ENCODE measurements at regions of chr10 and their contacts with region 1.

Region 1: DNA sequence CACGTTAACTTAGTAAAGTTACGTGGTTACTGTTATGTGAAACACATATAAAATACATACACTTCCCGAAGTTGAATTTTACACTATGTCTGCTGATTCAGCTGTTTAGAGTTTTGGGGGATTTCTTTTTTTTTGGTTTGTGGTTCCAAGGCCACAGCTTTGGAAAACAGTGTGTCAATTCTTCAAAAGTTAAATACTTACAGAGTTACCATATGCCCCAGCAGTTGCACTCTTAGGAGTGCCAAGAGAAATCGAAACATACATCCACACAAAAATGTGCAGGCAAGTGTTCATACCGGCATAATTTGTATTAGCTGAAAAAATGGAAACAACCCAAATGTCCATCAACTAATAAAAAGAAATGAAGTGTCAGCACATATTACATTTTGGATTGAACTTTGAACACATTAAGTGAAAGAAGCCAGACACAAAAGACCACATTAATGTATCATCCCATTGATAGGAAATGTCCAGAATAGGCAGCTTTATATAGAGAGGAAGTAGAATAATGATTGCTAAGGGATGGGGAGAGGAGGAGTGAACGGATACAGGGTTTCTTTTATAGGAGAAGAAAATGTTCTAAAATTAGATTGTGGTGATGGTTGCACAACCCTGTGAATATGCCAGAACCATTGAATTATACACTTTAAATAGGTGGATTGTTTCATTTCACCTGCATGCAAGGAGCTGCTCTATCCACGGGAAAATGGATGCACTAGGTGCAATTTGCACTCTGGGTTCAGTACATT is 17.6 kb downstream of the APBB1IP start:
- DNase-seq: no peak
- ATAC-seq: peak; percentile 44 to 48
- H3K4me3 Mint-ChIP-seq: peak overlapping the region; percentile 7 to 75 (median 47)
- H3K27ac Mint-ChIP-seq: peak overlapping the region; percentile 55 to 100 (median 80)
- H3K4me1 Mint-ChIP-seq: peaks cover 51 to 83% (median 79%) of the 10 kb centered on the region in 4 donors
- H3K27me3 Mint-ChIP-seq: no peaks in the 10 kb centered on the region

Region 2: GRCh38 chr10:26095781-26096180 is 360.0 kb before region 1 on chr10:
- POLR2A ChIA-PET with region 1: no interaction called
- DNase-seq: no peak
- ATAC-seq: no peak
- H3K4me3 Mint-ChIP-seq: no peak overlapping the region
- H3K27ac Mint-ChIP-seq: no peak overlapping the region
- H3K4me1 Mint-ChIP-seq: no peaks in the 10 kb centered on the region
- H3K27me3 Mint-ChIP-seq: peaks cover 3 to 23% (median 6%) of the 10 kb centered on the region in 5 donors

Region 3: GRCh38 chr10:26214551-26215395 is 241.0 kb before region 1 on chr10:
- POLR2A ChIA-PET with region 1: no interaction called
- DNase-seq: no peak
- ATAC-seq: no peak
- H3K4me3 Mint-ChIP-seq: peak overlapping the region; percentile 65 to 86 (median 80)
- H3K27ac Mint-ChIP-seq: no peak overlapping the region
- H3K4me1 Mint-ChIP-seq: peaks cover 11 to 55% (median 37%) of the 10 kb centered on the region in 4 donors
- H3K27me3 Mint-ChIP-seq: peaks cover 18 to 74% (median 54%) of the 10 kb centered on the region in 5 donors

Region 4: DNA sequence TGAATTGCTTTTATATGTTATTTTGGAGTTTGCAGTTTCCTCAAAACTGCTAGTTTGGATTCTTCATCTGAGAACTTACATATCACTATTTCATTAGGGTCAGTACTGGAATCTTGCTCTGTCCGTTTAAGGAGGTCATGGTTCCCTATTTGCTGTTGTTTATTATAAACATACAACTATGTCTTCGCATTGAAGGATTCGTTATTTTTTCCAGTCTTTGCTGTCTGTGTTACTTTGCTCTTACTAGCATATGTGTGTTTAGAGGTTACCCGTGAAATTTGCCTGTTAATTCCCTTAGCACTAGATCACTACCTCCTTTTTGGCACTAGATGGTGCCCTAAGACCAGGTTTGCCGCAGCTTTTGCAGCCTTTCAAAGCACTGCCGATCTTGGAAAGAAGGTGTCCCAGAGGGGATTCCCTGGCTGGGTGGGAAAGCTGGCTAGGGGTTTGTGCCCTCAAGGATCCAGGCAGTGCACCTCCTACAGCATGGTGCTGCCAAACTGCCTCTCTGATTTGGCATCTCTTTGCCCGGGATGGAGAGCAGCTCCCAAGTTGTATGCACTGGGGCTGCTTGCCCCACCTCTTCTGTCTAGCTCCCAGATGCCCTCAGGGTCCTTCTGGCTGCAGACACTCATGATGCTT is 120.7 kb before region 1 on chr10:
- POLR2A ChIA-PET with region 1: no interaction called
- DNase-seq: peak; percentile 28 to 79 (median 69)
- ATAC-seq: peak; percentile 90 to 94
- H3K4me3 Mint-ChIP-seq: peak overlapping the region; percentile 73 to 90 (median 83)
- H3K27ac Mint-ChIP-seq: peak overlapping the region; percentile 14 to 93 (median 60)
- H3K4me1 Mint-ChIP-seq: peaks cover 3 to 9% (median 6%) of the 10 kb centered on the region in 4 donors
- H3K27me3 Mint-ChIP-seq: no peaks in the 10 kb centered on the region

Region 5: GRCh38 chr10:26468700-26469099 is 13.0 kb after region 1 on chr10:
- POLR2A ChIA-PET with region 1: interaction called, 23 read pairs
- DNase-seq: peak; percentile 22 to 86 (median 72)
- ATAC-seq: peak; percentile 88 to 97
- H3K4me3 Mint-ChIP-seq: peak overlapping the region; percentile 64 to 86 (median 80)
- H3K27ac Mint-ChIP-seq: peak overlapping the region; percentile 70 to 98 (median 91)
- H3K4me1 Mint-ChIP-seq: peaks cover 41 to 97% (median 93%) of the 10 kb centered on the region in 4 donors
- H3K27me3 Mint-ChIP-seq: no peaks in the 10 kb centered on the region